ENCODE measurements at regions of chr14 and their contacts with region 1.

Region 1: GRCh38 chr14:87896393-87897380 is 96.3 kb downstream of the GALC start:
- DNase-seq: peak; percentile 25
- H3K4me3 Mint-ChIP-seq: no peak overlapping the region
- H3K27ac Mint-ChIP-seq: no peak overlapping the region
- H3K4me1 Mint-ChIP-seq: peaks cover 6% of the 10 kb centered on the region
- H3K27me3 Mint-ChIP-seq: no peaks in the 10 kb centered on the region
- CTCF ChIP-seq: no peak

Region 2: DNA sequence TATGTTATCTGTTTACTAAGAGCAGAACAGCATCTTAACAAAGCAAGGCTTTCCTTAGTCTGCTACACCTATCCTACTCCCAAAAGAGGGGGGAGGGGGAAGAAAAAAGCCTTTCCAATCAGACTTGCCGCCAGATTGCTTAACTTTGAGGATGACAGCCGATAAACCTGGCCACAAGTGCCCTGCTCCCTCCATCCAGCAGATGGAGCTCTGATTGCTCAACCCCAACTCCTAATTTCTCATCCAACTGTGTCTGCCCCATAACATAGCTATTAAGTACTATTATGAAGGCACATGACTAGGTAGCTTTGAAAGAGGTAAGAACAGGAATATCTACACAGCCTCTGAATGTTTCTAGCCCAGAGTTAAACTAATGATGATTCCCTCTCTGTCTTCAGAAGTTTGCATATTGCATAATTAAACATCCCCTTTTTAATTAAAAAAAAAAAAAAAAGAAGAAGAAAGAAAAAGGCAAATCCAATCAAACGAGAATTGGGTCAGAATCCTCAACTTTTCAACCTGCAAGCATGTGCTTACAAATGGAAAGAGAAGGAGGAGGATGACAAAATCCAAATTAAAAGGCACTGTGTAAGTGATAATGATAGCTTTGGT is 151.1 kb before region 1 on chr14:
- CTCF ChIA-PET with region 1: interaction called, 9 read pairs
- intact Hi-C with region 1: loop called (anchors 1 kb)
- DNase-seq: peak; percentile 44
- H3K4me3 Mint-ChIP-seq: no peak overlapping the region
- H3K27ac Mint-ChIP-seq: no peak overlapping the region
- H3K4me1 Mint-ChIP-seq: no peaks in the 10 kb centered on the region
- H3K27me3 Mint-ChIP-seq: peaks cover 8% of the 10 kb centered on the region
- CTCF ChIP-seq: peak; percentile 42

Region 3: DNA sequence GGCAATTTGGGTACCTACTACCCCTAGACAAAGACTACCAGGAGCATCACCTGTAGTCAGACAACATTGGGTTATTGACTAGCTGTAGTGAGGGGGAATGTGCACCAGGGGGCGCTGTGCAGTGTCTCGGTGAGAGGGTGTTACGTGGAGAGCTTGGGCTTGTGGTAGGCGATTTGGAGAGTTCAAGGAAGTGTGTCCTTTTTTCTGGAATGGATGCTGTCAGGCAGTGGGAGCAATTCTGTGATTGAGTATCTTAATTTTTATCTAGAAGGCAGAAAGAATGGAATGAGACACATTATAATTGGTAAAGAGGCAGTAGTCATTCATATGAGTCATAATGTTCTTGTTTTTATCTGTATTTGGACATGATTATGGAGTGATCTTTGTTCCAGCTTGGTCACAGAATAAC is 91.4 kb before region 1 on chr14:
- CTCF ChIA-PET with region 1: no interaction called
- intact Hi-C with region 1: loop called (anchors 1 kb)
- DNase-seq: peak; percentile 66
- H3K4me3 Mint-ChIP-seq: no peak overlapping the region
- H3K27ac Mint-ChIP-seq: no peak overlapping the region
- H3K4me1 Mint-ChIP-seq: peaks cover 29% of the 10 kb centered on the region
- H3K27me3 Mint-ChIP-seq: no peaks in the 10 kb centered on the region
- CTCF ChIP-seq: peak; percentile 59